ENCODE measurements at regions of chr22 and their contacts with region 1.

Region 1: DNA sequence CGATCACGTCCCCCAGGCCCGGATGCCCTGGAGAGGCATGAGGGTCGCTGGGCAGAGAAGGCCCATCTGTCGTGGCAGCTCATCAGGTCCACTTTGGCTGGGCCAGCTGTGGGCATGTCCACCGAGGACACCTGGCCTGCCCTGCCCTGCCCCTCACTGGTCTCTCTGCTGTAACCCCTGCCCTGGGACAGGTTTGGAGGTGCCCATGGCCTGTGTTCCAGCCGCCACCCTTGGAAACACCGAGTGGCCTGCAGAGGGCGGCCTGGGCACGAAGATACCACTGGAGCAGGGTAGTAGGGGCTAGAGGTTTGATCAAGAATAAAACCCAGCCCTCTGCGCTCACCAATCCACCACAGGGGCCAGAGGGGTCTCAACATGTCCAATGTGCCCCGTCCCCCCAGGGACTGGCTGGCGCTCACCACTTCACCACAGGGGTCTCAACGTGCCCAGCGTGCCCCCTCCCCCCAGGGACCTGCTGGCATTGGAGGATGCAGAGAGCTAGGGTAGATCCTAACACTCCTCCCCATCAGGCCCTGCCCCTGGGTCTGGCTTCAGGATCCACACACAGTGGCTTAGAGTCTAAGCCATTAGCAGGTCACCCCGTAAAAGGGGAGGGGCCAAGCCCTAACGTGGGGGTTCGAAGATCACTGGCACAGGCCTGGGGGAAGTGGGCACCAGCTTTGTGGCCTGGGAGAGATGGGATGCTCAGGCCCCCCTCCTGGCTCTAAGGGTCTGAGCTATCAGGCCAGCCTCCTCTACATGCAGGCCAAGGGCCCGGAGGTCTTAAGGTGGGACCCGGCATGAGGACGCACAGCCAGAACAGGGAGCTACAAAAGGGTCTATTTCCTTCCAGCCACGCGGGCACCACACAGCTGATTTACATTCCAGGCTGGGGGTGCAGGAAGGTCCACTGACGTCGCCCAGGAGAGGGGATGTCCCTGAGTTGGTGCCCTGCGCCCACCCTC is 1.3 kb upstream of the HDAC10 start:
- DNase-seq: no peak
- ATAC-seq: peak; percentile 17; the same call in 1 of the 3 replicates
- H3K4me3 ChIP-seq: no peak overlapping the region
- H3K27ac ChIP-seq: no peak overlapping the region
- H3K4me1 ChIP-seq: peaks cover 9 to 92% of the 10 kb centered on the region in 2 experiments
- H3K27me3 ChIP-seq: no peaks in the 10 kb centered on the region
- CTCF ChIP-seq: peak; percentile 45 to 46 (median 45)
- EP300 ChIP-seq: no peak
- POLR2A ChIP-seq: no peak
- RAD21 ChIP-seq: peak in 1 of 2 experiments; percentile 38; a peak in 1 of 4 replicates

Region 2: GRCh38 chr22:50262460-50262911 is 10.1 kb after region 1 on chr22:
- CTCF ChIA-PET with region 1: no interaction called
- POLR2A ChIA-PET with region 1: interaction called, 11 read pairs
- in situ Hi-C with region 1: no loop called
- intact Hi-C with region 1: no loop called
- DNase-seq: peak; percentile 46 to 77 (median 62)
- ATAC-seq: peak; percentile 80
- H3K4me3 ChIP-seq: no peak overlapping the region
- H3K27ac ChIP-seq: peak overlapping the region; percentile 76
- H3K4me1 ChIP-seq: peaks cover 15 to 85% of the 10 kb centered on the region in 2 experiments; a peak in 4 of 5 replicates
- H3K27me3 ChIP-seq: no peaks in the 10 kb centered on the region
- CTCF ChIP-seq: no peak
- EP300 ChIP-seq: no peak
- POLR2A ChIP-seq: peak; percentile 51
- RAD21 ChIP-seq: no peak

Region 3: DNA sequence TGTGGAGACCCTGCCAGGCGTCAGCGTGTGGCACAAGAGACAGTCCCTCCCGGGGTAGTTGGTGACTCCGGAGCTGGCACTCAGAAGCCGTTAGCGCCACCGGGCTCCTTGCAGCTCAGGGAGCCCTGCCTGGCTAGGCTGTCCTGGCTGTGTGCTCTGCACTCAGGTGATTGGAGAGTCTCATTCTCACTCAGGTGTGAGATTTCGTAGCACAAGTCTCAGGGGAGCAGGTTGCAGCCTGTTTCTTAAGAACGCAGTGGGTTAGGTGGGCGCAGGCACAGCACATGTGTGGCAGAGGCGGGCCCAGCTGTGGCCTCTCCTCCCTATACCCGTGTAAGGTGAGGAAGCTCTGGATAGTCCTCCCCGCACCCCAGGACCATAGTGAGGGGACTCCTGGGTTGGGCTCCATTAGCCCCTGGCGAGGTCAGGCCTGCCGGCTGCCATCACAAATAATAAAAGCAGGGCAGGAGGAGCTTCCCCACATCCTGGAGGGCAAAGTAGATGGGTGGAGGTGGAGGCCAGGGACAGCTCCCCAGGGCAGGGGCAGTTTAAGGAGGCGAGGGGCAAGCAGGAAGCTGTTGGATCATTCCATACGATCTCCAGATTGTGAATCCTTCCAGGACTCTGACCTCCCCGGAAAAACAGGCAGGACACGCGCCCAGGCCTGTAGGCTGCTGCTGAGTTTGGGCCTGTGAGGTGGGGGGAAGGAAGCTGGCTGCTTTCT is 183.1 kb after region 1 on chr22:
- CTCF ChIA-PET with region 1: no interaction called
- POLR2A ChIA-PET with region 1: no interaction called
- in situ Hi-C with region 1: no loop called
- intact Hi-C with region 1: no loop called
- DNase-seq: no peak
- ATAC-seq: no peak
- H3K4me3 ChIP-seq: no peak overlapping the region
- H3K27ac ChIP-seq: no peak overlapping the region
- H3K4me1 ChIP-seq: peaks cover 0 to 5% of the 10 kb centered on the region in 2 experiments; a peak in 1 of 5 replicates
- H3K27me3 ChIP-seq: no peaks in the 10 kb centered on the region
- CTCF ChIP-seq: no peak
- EP300 ChIP-seq: no peak
- POLR2A ChIP-seq: no peak
- RAD21 ChIP-seq: no peak